Colonic mucosa (tissue), 4 donors: ENCODE measurements at regions of chr11 and their contacts with region 1.

Region 1: GRCh38 chr11:128610721-128611617 is 23.6 kb upstream of the ETS1 start:
- DNase-seq: no peak
- H3K4me3 ChIP-seq: no peak overlapping the region
- H3K27ac ChIP-seq: peak overlapping the region; percentile 33
- H3K4me1 ChIP-seq: no peaks in the 10 kb centered on the region
- H3K27me3 ChIP-seq: no peaks in the 10 kb centered on the region
- CTCF ChIP-seq: no peak

Region 2: DNA sequence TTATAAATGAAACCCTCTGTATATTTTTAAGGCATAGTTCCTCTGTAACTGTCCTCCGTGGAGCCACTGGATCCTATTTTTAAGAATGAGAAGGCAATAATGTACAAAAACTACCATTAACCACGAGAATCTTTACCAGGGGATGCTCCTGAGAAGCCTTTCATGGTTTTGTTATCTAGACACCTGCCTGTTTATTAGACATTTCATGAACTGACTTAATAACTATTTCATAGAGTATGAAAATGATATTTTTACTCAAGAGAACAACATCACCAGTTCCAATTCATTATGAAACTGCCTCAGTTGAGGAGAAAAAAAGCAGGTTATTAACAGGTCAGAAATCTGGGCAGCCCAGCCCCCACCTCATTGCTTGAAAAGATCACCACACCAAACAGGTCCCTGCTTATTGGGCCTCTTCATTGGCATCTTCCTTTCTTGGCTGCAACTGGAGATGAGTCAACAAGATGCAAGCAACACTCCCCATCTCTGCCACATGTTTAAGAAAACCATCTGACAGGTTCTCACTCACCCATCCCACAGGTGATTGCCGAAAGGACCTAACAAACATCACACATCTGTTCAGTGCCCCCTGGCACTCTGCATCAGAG is 51.4 kb before region 1 on chr11:
- intact Hi-C with region 1: loop called (anchors 5 kb)
- DNase-seq: no peak
- H3K4me3 ChIP-seq: no peak overlapping the region
- H3K27ac ChIP-seq: no peak overlapping the region
- H3K4me1 ChIP-seq: peaks cover 7% of the 10 kb centered on the region
- H3K27me3 ChIP-seq: no peaks in the 10 kb centered on the region
- CTCF ChIP-seq: no peak